Gastrocnemius medialis (tissue), 4 donors: ENCODE measurements at regions of chr11 and their contacts with region 1.

Region 1: DNA sequence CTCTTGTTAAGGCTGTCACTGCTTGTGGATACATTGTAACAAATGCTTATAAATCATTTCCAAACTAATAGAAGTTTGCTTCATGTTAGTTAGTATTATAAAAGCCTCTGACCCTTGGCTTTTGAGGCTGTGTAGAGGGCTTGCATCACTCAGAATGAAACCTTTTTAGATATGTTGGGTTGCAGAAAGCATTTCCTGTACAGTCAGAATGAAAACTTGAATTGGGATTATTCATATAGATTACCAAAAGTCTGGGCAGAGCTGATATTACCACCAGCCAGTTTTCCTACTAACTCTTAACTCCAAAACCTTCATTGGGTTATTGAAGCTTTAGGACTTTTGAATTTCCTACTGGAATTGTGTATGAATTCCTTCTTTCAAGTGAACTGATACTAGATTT is 12.0 kb downstream of the KMT2A start:
- DNase-seq: no peak
- ATAC-seq: no peak
- H3K4me3 ChIP-seq: no peak overlapping the region
- H3K27ac ChIP-seq: no peak overlapping the region
- H3K4me1 ChIP-seq: peaks cover 26 to 29% of the 10 kb centered on the region in 2 donors
- H3K27me3 ChIP-seq: no peaks in the 10 kb centered on the region
- CTCF ChIP-seq: no peak
- POLR2A ChIP-seq: no peak

Region 2: GRCh38 chr11:117885777-117886176 is 562.5 kb before region 1 on chr11:
- in situ Hi-C with region 1: no loop called
- intact Hi-C with region 1: loop called (anchors 10 kb)
- DNase-seq: no peak
- ATAC-seq: peak; percentile 89 to 91
- H3K4me3 ChIP-seq: peak overlapping the region; percentile 6 to 33 (median 30)
- H3K27ac ChIP-seq: peak overlapping the region; percentile 16 to 69 (median 61)
- H3K4me1 ChIP-seq: peaks cover 0 to 13% of the 10 kb centered on the region in 2 donors
- H3K27me3 ChIP-seq: no peaks in the 10 kb centered on the region
- CTCF ChIP-seq: no peak
- POLR2A ChIP-seq: peak in 1 of 2 donors; percentile 28

Region 3: GRCh38 chr11:118415739-118416284 is 32.5 kb before region 1 on chr11:
- in situ Hi-C with region 1: no loop called
- intact Hi-C with region 1: loop called (anchors 2 kb)
- DNase-seq: peak in 1 of 2 donors; percentile 35
- ATAC-seq: peak; percentile 70 to 81
- H3K4me3 ChIP-seq: no peak overlapping the region
- H3K27ac ChIP-seq: peak overlapping the region in 1 of 4 donors; percentile 22
- H3K4me1 ChIP-seq: peaks cover 0 to 5% of the 10 kb centered on the region in 2 donors
- H3K27me3 ChIP-seq: no peaks in the 10 kb centered on the region
- CTCF ChIP-seq: no peak
- POLR2A ChIP-seq: no peak

Region 4: GRCh38 chr11:118435893-118436624 is 12.2 kb before region 1 on chr11 and contains the start of gene KMT2A:
- in situ Hi-C with region 1: no loop called
- intact Hi-C with region 1: no loop called
- DNase-seq: peak; percentile 92 to 94
- ATAC-seq: peak; percentile 75 to 81
- H3K4me3 ChIP-seq: peak within 1 kb of the TSS; percentile 92 to 97 (median 96)
- H3K27ac ChIP-seq: peak within 1 kb of the TSS; percentile 86 to 92 (median 90)
- H3K4me1 ChIP-seq: peaks cover 41 to 49% of the 10 kb centered on the region in 2 donors
- H3K27me3 ChIP-seq: no peaks in the 10 kb centered on the region
- CTCF ChIP-seq: peak in 4 of 5 experiments; percentile 17 to 100 (median 100)
- POLR2A ChIP-seq: peak; percentile 30 to 46
- total RNA-seq, gene KMT2A: 24.3 to 55.6 (median 27.9) TPM

Region 5: DNA sequence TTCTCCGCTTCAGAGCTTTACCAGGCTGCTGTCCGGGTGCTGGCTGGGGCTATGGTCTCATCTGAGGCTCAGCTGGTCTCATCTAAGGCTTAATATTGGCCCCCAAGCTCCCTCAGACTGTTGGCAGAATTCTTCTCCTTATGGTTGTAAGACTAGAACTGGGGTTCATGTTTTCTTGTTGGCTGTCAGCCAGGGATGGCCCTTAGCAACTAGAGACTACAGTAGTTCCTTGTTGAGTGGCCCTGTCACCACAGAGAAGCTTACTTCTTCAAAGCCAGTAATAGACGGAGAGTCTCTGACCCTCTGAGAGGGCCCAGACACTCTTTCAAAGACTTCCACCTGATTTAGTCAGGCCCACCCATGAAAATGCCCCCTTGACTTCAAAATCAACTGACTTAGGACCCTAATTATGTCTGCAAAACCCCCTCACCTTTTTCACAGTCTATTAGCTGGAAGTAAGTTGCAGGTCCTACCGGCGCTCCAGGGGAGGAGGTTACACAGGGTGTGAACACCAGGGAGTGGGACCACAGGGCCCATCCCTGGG is 255.3 kb after region 1 on chr11:
- in situ Hi-C with region 1: no loop called
- intact Hi-C with region 1: no loop called
- DNase-seq: peak; percentile 28 to 39
- ATAC-seq: no peak
- H3K4me3 ChIP-seq: no peak overlapping the region
- H3K27ac ChIP-seq: no peak overlapping the region
- H3K4me1 ChIP-seq: no peaks in the 10 kb centered on the region
- H3K27me3 ChIP-seq: no peaks in the 10 kb centered on the region
- CTCF ChIP-seq: no peak
- POLR2A ChIP-seq: no peak